CD14-positive monocyte (primary cell): ENCODE measurements at regions of chr11 and their contacts with region 1.

Region 1: GRCh38 chr11:48006301-48006992 is 26.1 kb downstream of the PTPRJ start:
- DNase-seq: peak in 2 of 3 donors; percentile 47 to 68
- H3K4me3 ChIP-seq: peak overlapping the region in 1 of 3 experiments; percentile 24
- H3K4me3 Mint-ChIP-seq: peak overlapping the region in 1 of 2 donors; percentile 47
- H3K27ac ChIP-seq: peak overlapping the region; percentile 95 to 96
- H3K27ac Mint-ChIP-seq: peak overlapping the region; percentile 96 to 99 (median 97)
- H3K4me1 ChIP-seq: peaks cover 79 to 81% of the 10 kb centered on the region in 2 donors
- H3K4me1 Mint-ChIP-seq: peaks cover 75% of the 10 kb centered on the region
- H3K27me3 ChIP-seq: no peaks in the 10 kb centered on the region
- H3K27me3 Mint-ChIP-seq: peaks cover 0 to 5% (median 0%) of the 10 kb centered on the region in 3 donors
- CTCF ChIP-seq: no peak

Region 2: GRCh38 chr11:47992959-47993820 is 13.3 kb before region 1 on chr11:
- intact Hi-C with region 1: loop called in 1 of 2 experiments (anchors 2 kb)
- DNase-seq: peak; percentile 47 to 71 (median 58)
- H3K4me3 ChIP-seq: no peak overlapping the region
- H3K4me3 Mint-ChIP-seq: no peak overlapping the region
- H3K27ac ChIP-seq: peak overlapping the region in 1 of 2 donors; percentile 18
- H3K27ac Mint-ChIP-seq: peak overlapping the region in 5 of 7 donors; percentile 36 to 75 (median 60)
- H3K4me1 ChIP-seq: peaks cover 62 to 95% of the 10 kb centered on the region in 2 donors
- H3K4me1 Mint-ChIP-seq: peaks cover 86% of the 10 kb centered on the region
- H3K27me3 ChIP-seq: no peaks in the 10 kb centered on the region
- H3K27me3 Mint-ChIP-seq: peaks cover 0 to 2% (median 1%) of the 10 kb centered on the region in 3 donors
- CTCF ChIP-seq: no peak